ENCODE measurements at regions of chr1 and their contacts with region 1.

Region 1: DNA sequence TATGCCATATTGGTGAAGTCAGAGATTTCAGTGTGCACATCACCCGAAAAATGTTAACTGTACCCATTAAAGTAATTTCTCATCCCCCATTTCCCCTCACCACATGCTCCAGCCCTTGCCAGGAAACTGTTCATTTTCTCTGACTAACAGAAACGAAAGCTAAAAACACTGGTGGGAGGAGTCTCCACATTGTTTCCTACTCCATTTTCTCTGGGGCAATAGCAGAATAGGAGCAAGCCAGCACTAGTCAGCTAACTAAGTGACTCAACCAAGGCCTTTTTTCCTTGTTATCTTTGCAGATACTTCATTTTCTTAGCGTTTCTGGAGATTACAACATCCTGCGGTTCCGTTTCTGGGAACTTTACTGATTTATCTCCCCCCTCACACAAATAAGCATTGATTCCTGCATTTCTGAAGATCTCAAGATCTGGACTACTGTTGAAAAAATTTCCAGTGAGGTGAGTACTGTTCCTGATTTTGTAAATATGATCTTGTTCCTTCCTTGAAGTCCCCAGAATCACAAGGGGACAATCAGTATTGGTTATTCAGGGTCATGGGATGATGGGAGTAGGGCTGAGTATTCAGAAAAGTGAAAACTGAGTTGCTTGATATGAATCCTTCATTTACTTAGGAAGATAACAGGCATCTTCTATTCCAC is at the start of gene IFI16:
- DNase-seq: peak; percentile 72
- ATAC-seq: peak; percentile 68
- H3K4me3 Mint-ChIP-seq: peak within 1 kb of the TSS; percentile 83
- H3K27ac Mint-ChIP-seq: peak within 1 kb of the TSS; percentile 96
- H3K4me1 Mint-ChIP-seq: peaks cover 33% of the 10 kb centered on the region
- H3K27me3 Mint-ChIP-seq: no peaks in the 10 kb centered on the region
- CTCF ChIP-seq: no peak
- total RNA-seq, gene IFI16: 190 to 199 TPM

Region 2: GRCh38 chr1:158931055-158931737 is 78.6 kb before region 1 on chr1 and contains the start of gene PYHIN1:
- CTCF ChIA-PET with region 1: no interaction called
- POLR2A ChIA-PET with region 1: interaction called, 10 read pairs
- intact Hi-C with region 1: no loop called
- DNase-seq: peak; percentile 27
- ATAC-seq: peak; percentile 74
- H3K4me3 Mint-ChIP-seq: peak within 1 kb of the TSS; percentile 82
- H3K27ac Mint-ChIP-seq: peak within 1 kb of the TSS; percentile 92
- H3K4me1 Mint-ChIP-seq: peaks cover 25% of the 10 kb centered on the region
- H3K27me3 Mint-ChIP-seq: no peaks in the 10 kb centered on the region
- CTCF ChIP-seq: no peak
- total RNA-seq, gene PYHIN1: 7.0 to 8.5 TPM

Region 3: GRCh38 chr1:158998781-158999161 is 11.1 kb before region 1 on chr1:
- CTCF ChIA-PET with region 1: interaction called, 3 read pairs
- POLR2A ChIA-PET with region 1: interaction called, 12 read pairs
- intact Hi-C with region 1: no loop called
- DNase-seq: peak; percentile 62
- ATAC-seq: peak; percentile 72
- H3K4me3 Mint-ChIP-seq: no peak overlapping the region
- H3K27ac Mint-ChIP-seq: peak overlapping the region; percentile 78
- H3K4me1 Mint-ChIP-seq: peaks cover 25% of the 10 kb centered on the region
- H3K27me3 Mint-ChIP-seq: no peaks in the 10 kb centered on the region
- CTCF ChIP-seq: peak; percentile 86

Region 4: DNA sequence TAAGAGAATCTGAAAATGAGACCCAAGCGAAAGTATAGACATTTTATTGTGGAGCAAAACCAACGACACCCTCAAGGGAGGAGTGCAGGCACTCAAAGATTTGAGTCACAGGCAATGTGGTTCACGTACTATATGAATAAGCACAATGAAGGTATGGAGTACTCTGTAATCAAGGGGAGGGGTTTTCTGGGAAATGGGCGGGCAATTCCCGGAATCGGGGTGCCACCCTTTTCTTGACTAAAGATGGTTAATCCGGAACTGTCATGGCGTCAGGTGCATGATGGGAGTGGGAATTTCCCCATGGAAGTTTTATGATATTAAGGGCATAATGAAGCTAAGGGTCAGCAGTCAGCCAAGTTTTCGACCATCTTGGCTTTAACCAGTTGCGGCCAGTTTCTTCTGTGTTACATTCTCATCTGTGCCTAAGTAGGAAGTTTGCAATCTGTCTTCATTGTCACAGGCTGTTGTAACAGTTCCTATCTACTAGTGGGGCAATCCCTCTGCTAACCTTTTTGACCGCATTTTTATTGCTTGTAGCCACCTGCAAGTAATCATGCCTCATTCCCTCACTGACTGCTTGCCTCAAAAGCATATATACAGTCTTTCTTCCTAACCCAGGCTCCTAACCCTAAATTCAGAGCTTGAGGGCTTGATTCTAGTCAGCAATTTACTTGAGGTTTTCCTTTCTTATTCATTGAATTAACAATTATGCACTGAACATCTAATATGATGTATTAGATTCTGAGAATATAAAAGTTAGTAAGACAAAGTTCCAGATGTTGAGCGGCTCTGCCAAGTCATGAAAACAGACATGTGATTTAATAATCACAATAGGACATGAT is 67.5 kb after region 1 on chr1:
- CTCF ChIA-PET with region 1: interaction called, 7 read pairs
- POLR2A ChIA-PET with region 1: interaction called, 33 read pairs
- intact Hi-C with region 1: loop called (anchors 5 kb)
- DNase-seq: peak; percentile 97
- ATAC-seq: peak; percentile 83
- H3K4me3 Mint-ChIP-seq: peak overlapping the region; percentile 77
- H3K27ac Mint-ChIP-seq: peak overlapping the region; percentile 94
- H3K4me1 Mint-ChIP-seq: peaks cover 24% of the 10 kb centered on the region
- H3K27me3 Mint-ChIP-seq: no peaks in the 10 kb centered on the region
- CTCF ChIP-seq: no peak